SK-N-SH (cell line): ENCODE measurements at regions of chr12 and their contacts with region 1.

Region 1: GRCh38 chr12:24852420-24852819 is 96.5 kb downstream of the BCAT1 start:
- DNase-seq: no peak
- H3K4me3 ChIP-seq: no peak overlapping the region
- H3K27ac ChIP-seq: no peak overlapping the region
- H3K4me1 ChIP-seq: peaks cover 0 to 14% of the 10 kb centered on the region in 2 experiments; a peak in 3 of 4 replicates
- H3K27me3 ChIP-seq: no peaks in the 10 kb centered on the region
- CTCF ChIP-seq: peak; percentile 68
- EP300 ChIP-seq: no peak
- RAD21 ChIP-seq: peak; percentile 51

Region 2: GRCh38 chr12:24743941-24744793 is 108.3 kb before region 1 on chr12:
- CTCF ChIA-PET with region 1: no interaction called
- POLR2A ChIA-PET with region 1: no interaction called
- DNase-seq: no peak
- H3K4me3 ChIP-seq: no peak overlapping the region
- H3K27ac ChIP-seq: no peak overlapping the region
- H3K4me1 ChIP-seq: no peaks in the 10 kb centered on the region
- H3K27me3 ChIP-seq: no peaks in the 10 kb centered on the region
- CTCF ChIP-seq: no peak
- EP300 ChIP-seq: no peak
- RAD21 ChIP-seq: no peak

Region 3: GRCh38 chr12:24875014-24875413 is 22.6 kb after region 1 on chr12:
- CTCF ChIA-PET with region 1: interaction called, 14 read pairs
- POLR2A ChIA-PET with region 1: no interaction called
- DNase-seq: no peak
- H3K4me3 ChIP-seq: no peak overlapping the region
- H3K27ac ChIP-seq: no peak overlapping the region
- H3K4me1 ChIP-seq: peaks cover 0 to 2% of the 10 kb centered on the region in 2 experiments; a peak in 1 of 4 replicates
- H3K27me3 ChIP-seq: no peaks in the 10 kb centered on the region
- CTCF ChIP-seq: no peak
- EP300 ChIP-seq: no peak
- RAD21 ChIP-seq: no peak

Region 4: DNA sequence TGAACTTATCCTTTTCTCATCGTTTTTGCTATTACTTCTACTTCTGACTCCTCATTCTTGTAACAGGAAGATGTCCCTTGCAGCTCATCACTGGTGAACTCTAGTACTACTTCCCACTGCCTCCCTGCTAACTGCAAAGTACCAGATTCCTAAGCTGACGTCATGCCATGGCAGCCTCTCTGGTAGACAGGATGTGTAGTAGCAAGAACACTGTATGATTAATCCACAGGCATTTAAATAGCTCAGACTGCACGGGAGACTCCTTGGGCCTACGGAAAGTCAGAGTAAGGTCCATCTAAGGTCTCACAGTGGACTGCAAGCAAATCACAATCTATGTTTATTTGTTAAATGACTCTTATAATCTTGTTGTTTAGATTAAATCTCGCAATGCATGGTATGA is 299.1 kb after region 1 on chr12:
- CTCF ChIA-PET with region 1: interaction called, 12 read pairs
- POLR2A ChIA-PET with region 1: no interaction called
- DNase-seq: peak; percentile 15
- H3K4me3 ChIP-seq: no peak overlapping the region
- H3K27ac ChIP-seq: peak overlapping the region; percentile 28 to 75; a peak in 3 of 4 replicates
- H3K4me1 ChIP-seq: peaks cover 0 to 5% of the 10 kb centered on the region in 2 experiments; a peak in 1 of 4 replicates
- H3K27me3 ChIP-seq: no peaks in the 10 kb centered on the region
- CTCF ChIP-seq: no peak
- EP300 ChIP-seq: no peak
- RAD21 ChIP-seq: no peak